ENCODE measurements at regions of chr3 and their contacts with region 1.

Region 1: DNA sequence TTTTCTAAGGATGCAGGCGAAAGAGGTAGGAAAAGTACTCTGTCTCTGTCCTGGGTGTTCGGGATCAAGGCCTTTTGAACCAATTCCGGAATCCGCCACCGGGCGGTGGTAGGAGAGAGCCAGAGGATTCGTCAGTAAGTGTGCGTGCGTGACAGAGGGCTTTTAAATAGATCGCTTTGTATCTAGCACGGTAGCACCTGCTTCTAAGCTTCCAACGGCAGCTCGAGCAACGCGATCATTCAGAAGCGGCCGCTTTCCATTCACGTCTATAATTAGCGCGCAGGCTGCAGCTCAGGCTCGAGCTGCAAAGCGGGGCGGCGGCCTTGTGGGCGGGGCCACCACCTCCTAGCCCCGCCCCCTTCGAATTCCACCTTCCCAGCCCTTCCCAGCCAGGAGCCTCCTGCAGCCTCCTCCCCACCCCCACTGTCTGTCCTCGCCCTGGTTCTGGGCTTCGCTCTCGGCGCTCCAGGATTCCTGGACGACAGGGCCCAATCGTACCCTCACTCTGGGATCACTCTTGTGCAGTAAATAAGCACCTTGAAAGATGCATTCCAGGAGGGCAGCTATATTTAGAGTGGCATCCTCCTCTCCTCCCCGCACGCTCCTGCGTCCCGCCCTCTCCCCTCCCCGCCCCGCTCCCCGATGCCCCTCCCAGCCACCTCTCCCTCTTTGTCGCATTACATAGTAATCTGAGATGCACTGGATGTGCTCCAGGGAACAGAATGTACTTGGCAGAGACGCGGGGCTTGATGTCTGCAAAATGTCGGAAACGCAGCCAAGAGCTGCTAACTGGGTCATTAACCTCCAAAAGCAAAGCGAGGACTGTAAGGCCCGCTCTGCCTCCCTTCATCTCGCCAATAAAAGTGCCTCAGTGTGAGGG is 224.1 kb upstream of the TPRG1 start:
- DNase-seq: peak; percentile 33
- H3K4me3 ChIP-seq: peak overlapping the region; percentile 33 to 73 (median 36)
- H3K27ac ChIP-seq: peak overlapping the region; percentile 89
- H3K4me1 ChIP-seq: peaks cover 38% of the 10 kb centered on the region
- H3K27me3 ChIP-seq: no peaks in the 10 kb centered on the region
- CTCF ChIP-seq: peak in 2 of 3 experiments; percentile 40 to 48

Region 2: GRCh38 chr3:187745201-187746058 is 1202.2 kb before region 1 on chr3 and contains the start of gene BCL6:
- dilution Hi-C with region 1: loop called (anchors 25 kb)
- DNase-seq: peak; percentile 74
- H3K4me3 ChIP-seq: peak within 1 kb of the TSS; percentile 55 to 100 (median 93)
- H3K27ac ChIP-seq: peak within 1 kb of the TSS; percentile 95
- H3K4me1 ChIP-seq: peaks cover 46% of the 10 kb centered on the region
- H3K27me3 ChIP-seq: no peaks in the 10 kb centered on the region
- CTCF ChIP-seq: peak in 1 of 3 experiments; percentile 7
- polyA plus RNA-seq, gene BCL6: 4.1 to 7.8 TPM (median 7.7 TPM) in 3 replicates